ENCODE measurements at regions of chr9 and their contacts with region 1.

Region 1: DNA sequence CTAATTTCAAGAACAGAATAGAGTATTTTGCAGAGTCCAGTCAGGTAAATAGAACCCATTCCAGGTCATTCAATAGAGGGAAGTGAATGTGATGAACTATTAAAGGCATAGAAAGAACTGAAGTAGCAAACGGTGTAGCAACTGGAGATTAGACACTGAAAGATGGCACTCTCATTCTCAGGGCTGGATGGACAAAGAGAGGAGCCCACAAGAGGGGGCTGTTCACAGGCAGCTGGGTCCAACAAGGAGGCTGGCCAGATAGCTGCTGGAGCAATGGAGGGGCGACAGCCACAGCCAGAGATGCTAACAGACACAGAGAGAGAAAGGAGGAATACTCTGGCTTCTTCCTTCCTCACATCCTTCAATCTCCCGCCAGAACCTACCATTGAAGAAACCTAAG is 93.1 kb upstream of the SMARCA2 start:
- DNase-seq: no peak
- ATAC-seq: peak; percentile 57
- H3K4me3 ChIP-seq: no peak overlapping the region
- H3K27ac ChIP-seq: no peak overlapping the region; the same call in 1 of the 2 replicates
- H3K4me1 ChIP-seq: peaks cover 3% of the 10 kb centered on the region
- H3K27me3 ChIP-seq: no peaks in the 10 kb centered on the region
- CTCF ChIP-seq: 0 out of 6 replicates have a peak, but pooled peaks of 2 of the 3 experiments have one; percentile 7 to 10
- EP300 ChIP-seq: no peak
- POLR2A ChIP-seq: no peak
- RAD21 ChIP-seq: peak; percentile 35

Region 2: GRCh38 chr9:1514776-1515363 is 407.2 kb before region 1 on chr9:
- CTCF ChIA-PET with region 1: no interaction called
- POLR2A ChIA-PET with region 1: no interaction called
- RAD21 ChIA-PET with region 1: no interaction called
- SMC1A ChIA-PET with region 1: no interaction called
- in situ Hi-C with region 1: no loop called
- intact Hi-C with region 1: no loop called
- DNase-seq: no peak
- ATAC-seq: no peak
- H3K4me3 ChIP-seq: no peak overlapping the region
- H3K27ac ChIP-seq: no peak overlapping the region
- H3K4me1 ChIP-seq: no peaks in the 10 kb centered on the region
- H3K27me3 ChIP-seq: no peaks in the 10 kb centered on the region
- CTCF ChIP-seq: no peak
- EP300 ChIP-seq: no peak
- POLR2A ChIP-seq: no peak
- RAD21 ChIP-seq: no peak

Region 3: DNA sequence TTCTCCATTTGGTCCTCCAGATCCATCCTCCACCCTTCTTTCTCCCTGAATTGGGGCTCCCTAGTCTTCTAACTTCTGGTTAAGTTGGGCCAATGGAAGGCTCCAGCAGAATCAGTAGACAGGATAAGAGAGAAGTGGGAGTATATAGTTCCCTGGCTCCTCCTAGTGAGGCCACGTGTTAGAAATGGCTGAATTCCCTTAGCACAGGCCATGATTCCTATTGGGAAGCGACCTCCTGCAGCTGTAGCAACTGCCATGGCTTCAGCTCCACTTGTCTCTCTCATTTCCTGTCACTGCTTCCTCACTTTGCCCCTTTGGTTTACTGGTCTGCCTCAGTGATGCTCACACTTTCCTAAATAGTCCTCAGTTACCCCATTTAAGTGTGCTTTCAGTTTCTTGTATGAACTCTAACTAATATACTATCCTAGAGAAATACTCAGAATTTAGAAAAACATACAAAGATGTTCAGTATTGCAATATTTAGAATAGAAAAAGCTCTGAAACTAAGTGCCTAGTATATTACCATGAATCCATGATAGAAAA is 11.7 kb before region 1 on chr9:
- CTCF ChIA-PET with region 1: interaction called, 3 read pairs
- POLR2A ChIA-PET with region 1: interaction called, 9 read pairs
- RAD21 ChIA-PET with region 1: interaction called, 3 read pairs
- SMC1A ChIA-PET with region 1: interaction called, 29 read pairs
- in situ Hi-C with region 1: no loop called
- intact Hi-C with region 1: no loop called
- DNase-seq: no peak
- ATAC-seq: no peak
- H3K4me3 ChIP-seq: no peak overlapping the region
- H3K27ac ChIP-seq: no peak overlapping the region
- H3K4me1 ChIP-seq: peaks cover 5% of the 10 kb centered on the region; the same call in 1 of the 2 replicates
- H3K27me3 ChIP-seq: no peaks in the 10 kb centered on the region
- CTCF ChIP-seq: no peak
- EP300 ChIP-seq: no peak
- POLR2A ChIP-seq: no peak
- RAD21 ChIP-seq: no peak

Region 4: GRCh38 chr9:1960342-1961042 is 38.5 kb after region 1 on chr9:
- CTCF ChIA-PET with region 1: no interaction called
- POLR2A ChIA-PET with region 1: no interaction called
- RAD21 ChIA-PET with region 1: no interaction called
- SMC1A ChIA-PET with region 1: no interaction called
- in situ Hi-C with region 1: no loop called
- intact Hi-C with region 1: no loop called
- DNase-seq: no peak
- ATAC-seq: no peak
- H3K4me3 ChIP-seq: no peak overlapping the region
- H3K27ac ChIP-seq: no peak overlapping the region
- H3K4me1 ChIP-seq: no peaks in the 10 kb centered on the region
- H3K27me3 ChIP-seq: no peaks in the 10 kb centered on the region
- CTCF ChIP-seq: no peak
- EP300 ChIP-seq: no peak
- POLR2A ChIP-seq: no peak
- RAD21 ChIP-seq: no peak

Measured in GM12878 (cell line).